Calu3 (cell line): ENCODE measurements at regions of chr2 and their contacts with region 1.

Region 1: GRCh38 chr2:215949991-215950404 is 63.4 kb downstream of the MREG start:
- DNase-seq: peak; percentile 16
- H3K4me3 Mint-ChIP-seq: no peak overlapping the region
- H3K27ac Mint-ChIP-seq: no peak overlapping the region
- H3K4me1 Mint-ChIP-seq: peaks cover 21% of the 10 kb centered on the region
- H3K27me3 Mint-ChIP-seq: no peaks in the 10 kb centered on the region
- CTCF ChIP-seq: peak; percentile 44

Region 2: DNA sequence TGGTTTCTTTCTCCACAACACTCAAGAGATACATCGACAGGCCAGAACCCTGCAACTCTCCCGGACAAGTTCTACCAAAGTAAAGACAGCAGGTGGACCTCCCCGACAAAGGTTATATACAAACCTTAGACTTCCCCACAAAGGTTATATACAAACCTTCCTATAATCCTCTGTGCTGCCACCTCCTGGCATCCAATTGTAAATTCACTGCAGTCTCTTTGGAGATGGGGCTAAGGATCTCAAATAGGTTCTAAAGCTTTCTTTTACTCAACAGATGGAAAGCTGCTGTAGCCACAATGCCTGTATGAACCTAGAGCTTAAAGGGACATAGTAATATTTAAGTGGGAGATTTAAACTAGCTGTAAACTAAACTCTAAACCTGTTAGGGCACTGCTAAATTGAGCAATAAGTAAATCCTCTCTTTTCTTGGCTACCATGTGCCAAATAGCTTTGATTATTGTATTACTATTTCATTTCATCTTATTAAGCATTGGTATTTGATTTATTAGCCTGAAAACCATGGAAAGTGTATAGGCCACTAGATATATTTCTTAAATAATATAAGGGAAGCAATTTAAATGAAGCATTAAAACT is 73.2 kb after region 1 on chr2:
- CTCF ChIA-PET with region 1: interaction called, 14 read pairs
- intact Hi-C with region 1: loop called (anchors 1 kb)
- DNase-seq: peak; percentile 59
- H3K4me3 Mint-ChIP-seq: no peak overlapping the region
- H3K27ac Mint-ChIP-seq: no peak overlapping the region
- H3K4me1 Mint-ChIP-seq: peaks cover 13% of the 10 kb centered on the region
- H3K27me3 Mint-ChIP-seq: no peaks in the 10 kb centered on the region
- CTCF ChIP-seq: peak; percentile 54

Region 3: GRCh38 chr2:216064011-216064630 is 114.1 kb after region 1 on chr2:
- CTCF ChIA-PET with region 1: no interaction called
- intact Hi-C with region 1: no loop called
- DNase-seq: no peak
- H3K4me3 Mint-ChIP-seq: no peak overlapping the region
- H3K27ac Mint-ChIP-seq: no peak overlapping the region
- H3K4me1 Mint-ChIP-seq: peaks cover 32% of the 10 kb centered on the region
- H3K27me3 Mint-ChIP-seq: no peaks in the 10 kb centered on the region
- CTCF ChIP-seq: no peak